Activated CD8-positive, alpha-beta T cell treated with anti-CD3 and anti-CD28 coated beads, Interleukin-2, amount 10 ng/mL, durations not matched to agents 7 days and 5 days (primary cell): ENCODE measurements at regions of chr1 and their contacts with region 1.

Region 1: DNA sequence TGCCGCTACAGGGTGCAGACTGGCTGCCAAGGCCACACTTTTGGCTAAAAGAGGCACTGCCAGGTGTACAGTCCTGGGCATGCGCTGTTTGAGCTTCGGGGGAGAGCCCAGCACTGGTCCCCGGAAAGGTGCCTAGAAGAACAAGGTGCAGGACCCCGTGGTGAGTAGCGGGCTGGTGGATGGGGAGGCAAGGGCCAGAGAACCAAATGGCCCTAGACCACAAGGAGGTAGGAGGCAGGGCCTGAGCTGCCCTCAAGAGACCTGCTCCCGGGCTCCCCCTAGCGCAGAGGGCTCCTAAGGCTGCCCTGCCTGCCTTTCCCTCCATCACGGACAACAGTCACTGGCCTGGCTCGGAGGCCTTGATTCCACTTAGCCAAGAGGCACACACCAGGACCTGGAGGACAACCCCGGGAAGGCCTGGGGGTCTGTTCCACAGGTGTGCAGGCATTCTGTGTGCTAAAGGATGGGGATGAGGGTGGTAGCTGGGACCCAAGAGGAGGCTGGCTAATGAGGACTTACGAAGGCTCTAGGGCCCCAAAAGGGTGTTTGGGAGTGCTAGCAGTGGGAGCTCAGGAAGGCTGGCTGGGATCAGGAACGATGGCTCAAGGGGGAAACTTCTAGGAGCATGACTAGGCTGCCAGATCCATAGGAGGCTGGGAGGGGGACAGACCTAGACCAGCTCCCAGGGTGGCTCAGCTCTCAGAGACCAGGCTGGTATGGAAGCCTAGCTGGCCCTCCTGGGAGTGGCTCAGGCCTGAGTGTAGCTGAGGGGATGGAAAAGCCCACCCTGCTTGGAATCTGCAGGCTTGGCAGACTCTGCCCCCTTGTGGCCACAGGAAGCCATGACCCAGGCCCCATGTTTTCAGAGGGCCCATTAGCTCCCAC is 742 bp downstream of the ARTN start:
- DNase-seq: peak; percentile 70
- ATAC-seq: peak; percentile 64
- H3K4me3 Mint-ChIP-seq: no peak overlapping the region
- H3K27ac Mint-ChIP-seq: no peak overlapping the region
- H3K4me1 Mint-ChIP-seq: peaks cover 23% of the 10 kb centered on the region
- H3K27me3 Mint-ChIP-seq: peaks cover 20% of the 10 kb centered on the region

Region 2: DNA sequence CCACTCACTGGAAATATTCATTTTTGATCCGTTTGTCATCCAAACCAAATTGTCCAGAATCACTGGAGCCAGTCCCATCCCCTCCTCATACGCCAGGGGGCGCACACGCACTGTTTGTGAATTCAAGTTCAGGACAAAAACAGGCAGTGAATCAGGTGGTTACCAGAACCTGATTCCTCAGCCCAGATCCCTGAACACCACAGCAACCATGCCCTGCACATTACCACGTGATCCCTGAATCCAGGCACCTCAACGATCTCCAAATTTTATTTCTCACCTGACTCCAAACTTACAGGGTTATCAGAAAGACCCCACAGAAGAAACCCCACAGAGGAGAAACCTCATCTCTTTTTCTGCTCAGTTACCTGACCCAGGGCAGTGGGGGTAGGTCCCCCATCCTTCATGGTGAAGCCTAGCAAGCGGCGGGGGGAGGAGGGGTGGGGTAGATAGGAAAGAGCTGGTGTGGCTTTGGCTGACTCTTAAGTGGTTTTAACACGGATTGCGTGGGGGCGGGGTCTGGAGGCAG is 405.1 kb before region 1 on chr1:
- CTCF ChIA-PET with region 1: interaction called, 18 read pairs
- POLR2A ChIA-PET with region 1: no interaction called
- DNase-seq: peak; percentile 85
- ATAC-seq: peak; percentile 73
- H3K4me3 Mint-ChIP-seq: no peak overlapping the region
- H3K27ac Mint-ChIP-seq: no peak overlapping the region
- H3K4me1 Mint-ChIP-seq: peaks cover 20% of the 10 kb centered on the region
- H3K27me3 Mint-ChIP-seq: peaks cover 48% of the 10 kb centered on the region

Region 3: DNA sequence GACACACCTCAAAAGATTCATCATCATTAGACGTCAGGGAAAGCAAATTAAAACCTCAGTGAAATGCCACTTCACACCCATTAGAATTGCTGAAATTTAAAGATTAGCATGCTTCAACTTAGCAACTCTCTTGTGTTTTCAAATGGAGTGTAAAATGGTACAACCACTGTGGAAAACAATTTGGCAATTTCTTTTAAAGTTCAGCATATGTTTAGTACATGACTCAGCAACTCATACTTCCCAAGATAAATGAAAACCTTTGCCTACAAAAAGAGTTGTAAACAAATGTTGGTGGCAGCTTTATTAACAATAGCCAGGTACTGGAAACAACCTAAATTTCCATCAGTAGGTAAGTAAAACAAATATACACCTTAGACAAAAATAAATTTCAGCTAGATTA is 184.3 kb before region 1 on chr1:
- CTCF ChIA-PET with region 1: interaction called, 16 read pairs
- POLR2A ChIA-PET with region 1: interaction called, 3 read pairs
- DNase-seq: no peak
- ATAC-seq: no peak
- H3K4me3 Mint-ChIP-seq: no peak overlapping the region
- H3K27ac Mint-ChIP-seq: no peak overlapping the region
- H3K4me1 Mint-ChIP-seq: no peaks in the 10 kb centered on the region
- H3K27me3 Mint-ChIP-seq: no peaks in the 10 kb centered on the region

Region 4: GRCh38 chr1:43832255-43832654 is 102.1 kb before region 1 on chr1:
- CTCF ChIA-PET with region 1: interaction called, 10 read pairs
- POLR2A ChIA-PET with region 1: no interaction called
- DNase-seq: peak; percentile 42
- ATAC-seq: peak; percentile 73
- H3K4me3 Mint-ChIP-seq: no peak overlapping the region
- H3K27ac Mint-ChIP-seq: peak overlapping the region; percentile 64
- H3K4me1 Mint-ChIP-seq: peaks cover 58% of the 10 kb centered on the region
- H3K27me3 Mint-ChIP-seq: no peaks in the 10 kb centered on the region

Region 5: DNA sequence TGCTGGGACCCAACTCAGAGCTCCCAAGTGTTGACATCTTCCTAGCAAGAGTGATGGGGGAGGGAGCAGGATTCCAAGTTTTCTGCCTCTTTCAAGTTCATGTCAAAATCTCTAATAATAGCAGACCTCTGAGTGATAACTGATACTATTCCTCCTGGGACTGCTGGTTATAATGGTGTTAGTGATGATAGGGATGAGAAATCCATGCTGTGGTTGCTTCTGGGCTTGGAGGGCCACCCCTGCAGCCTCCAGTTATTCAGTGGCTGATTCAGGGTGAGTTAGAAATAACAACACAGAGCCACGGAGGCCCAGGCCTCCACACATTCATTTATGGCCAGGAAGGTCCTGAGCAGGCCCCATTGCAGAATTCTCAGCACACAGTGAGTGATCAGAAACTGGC is 41.3 kb before region 1 on chr1:
- CTCF ChIA-PET with region 1: interaction called, 14 read pairs
- POLR2A ChIA-PET with region 1: no interaction called
- DNase-seq: no peak
- ATAC-seq: no peak
- H3K4me3 Mint-ChIP-seq: no peak overlapping the region
- H3K27ac Mint-ChIP-seq: no peak overlapping the region
- H3K4me1 Mint-ChIP-seq: no peaks in the 10 kb centered on the region
- H3K27me3 Mint-ChIP-seq: no peaks in the 10 kb centered on the region

Region 6: GRCh38 chr1:43957407-43958040 is 23.2 kb after region 1 on chr1:
- CTCF ChIA-PET with region 1: interaction called, 16 read pairs
- POLR2A ChIA-PET with region 1: no interaction called
- DNase-seq: no peak
- ATAC-seq: no peak
- H3K4me3 Mint-ChIP-seq: no peak overlapping the region
- H3K27ac Mint-ChIP-seq: no peak overlapping the region
- H3K4me1 Mint-ChIP-seq: peaks cover 4% of the 10 kb centered on the region
- H3K27me3 Mint-ChIP-seq: no peaks in the 10 kb centered on the region

Region 7: GRCh38 chr1:43986712-43987111 is 52.4 kb after region 1 on chr1:
- CTCF ChIA-PET with region 1: no interaction called
- POLR2A ChIA-PET with region 1: no interaction called
- DNase-seq: no peak
- ATAC-seq: no peak
- H3K4me3 Mint-ChIP-seq: no peak overlapping the region
- H3K27ac Mint-ChIP-seq: no peak overlapping the region
- H3K4me1 Mint-ChIP-seq: peaks cover 10% of the 10 kb centered on the region
- H3K27me3 Mint-ChIP-seq: no peaks in the 10 kb centered on the region

Region 8: GRCh38 chr1:44012941-44013609 is 78.7 kb after region 1 on chr1:
- CTCF ChIA-PET with region 1: no interaction called
- POLR2A ChIA-PET with region 1: no interaction called
- DNase-seq: no peak
- ATAC-seq: peak; percentile 47
- H3K4me3 Mint-ChIP-seq: no peak overlapping the region
- H3K27ac Mint-ChIP-seq: no peak overlapping the region
- H3K4me1 Mint-ChIP-seq: peaks cover 10% of the 10 kb centered on the region
- H3K27me3 Mint-ChIP-seq: no peaks in the 10 kb centered on the region

Region 9: DNA sequence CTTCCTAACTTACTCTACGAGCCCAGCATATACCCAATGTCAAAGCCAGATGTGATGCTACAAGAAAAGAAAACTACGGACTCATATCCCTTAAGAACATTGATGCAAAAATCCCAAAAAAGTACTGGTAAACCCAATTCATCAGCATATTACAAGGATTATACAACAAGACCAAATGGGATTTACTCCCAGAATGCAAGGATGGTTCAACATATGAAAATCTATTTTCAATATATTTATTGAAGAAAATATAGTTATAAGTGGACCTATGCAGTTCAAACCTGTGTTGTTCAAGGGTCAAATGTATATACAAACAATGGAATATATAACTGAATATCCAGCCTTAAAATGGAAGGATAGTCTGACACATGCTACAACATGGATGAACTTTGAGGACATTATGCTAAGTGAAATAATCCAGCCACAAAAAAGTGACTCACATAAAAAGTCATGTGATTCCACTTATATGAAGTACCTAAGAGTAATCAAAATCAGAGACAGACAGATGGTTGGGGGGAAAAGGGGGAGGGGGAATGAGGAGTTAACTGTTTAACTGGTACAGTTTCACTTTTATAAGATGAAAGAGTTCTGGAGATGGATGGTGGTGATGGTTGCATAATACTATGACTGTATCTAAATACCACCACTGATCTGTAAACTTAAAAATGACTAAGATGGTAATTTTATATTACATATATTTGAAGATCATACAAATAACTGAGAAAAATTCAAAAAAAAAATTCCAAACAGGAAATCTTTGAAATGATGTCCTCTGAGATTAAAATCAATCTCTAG is 210.8 kb after region 1 on chr1:
- CTCF ChIA-PET with region 1: no interaction called
- POLR2A ChIA-PET with region 1: no interaction called
- DNase-seq: no peak
- ATAC-seq: no peak
- H3K4me3 Mint-ChIP-seq: no peak overlapping the region
- H3K27ac Mint-ChIP-seq: no peak overlapping the region
- H3K4me1 Mint-ChIP-seq: no peaks in the 10 kb centered on the region
- H3K27me3 Mint-ChIP-seq: peaks cover 12% of the 10 kb centered on the region